A673 (cell line): ENCODE measurements at regions of chr4 and their contacts with region 1.

Region 1: GRCh38 chr4:30839583-30840520 is 119.7 kb downstream of the PCDH7 start:
- DNase-seq: peak; percentile 83
- H3K4me3 ChIP-seq: no peak overlapping the region
- H3K27ac ChIP-seq: peak overlapping the region; percentile 44
- H3K4me1 ChIP-seq: peaks cover 77% of the 10 kb centered on the region
- H3K27me3 ChIP-seq: no peaks in the 10 kb centered on the region
- CTCF ChIP-seq: no peak

Region 2: GRCh38 chr4:30950737-30951136 is 110.9 kb after region 1 on chr4:
- CTCF ChIA-PET with region 1: no interaction called
- POLR2A ChIA-PET with region 1: no interaction called
- intact Hi-C with region 1: loop called (anchors 10 kb)
- DNase-seq: peak; percentile 82
- H3K4me3 ChIP-seq: no peak overlapping the region
- H3K27ac ChIP-seq: no peak overlapping the region
- H3K4me1 ChIP-seq: peaks cover 63% of the 10 kb centered on the region
- H3K27me3 ChIP-seq: no peaks in the 10 kb centered on the region
- CTCF ChIP-seq: no peak